ENCODE measurements at regions of chr1 and their contacts with region 1.

Region 1: GRCh38 chr1:171313835-171314320 is at the start of gene FMO4:
- DNase-seq: peak; percentile 77
- ATAC-seq: peak; percentile 100
- H3K4me3 Mint-ChIP-seq: peak within 1 kb of the TSS; percentile 68
- H3K27ac Mint-ChIP-seq: peak within 1 kb of the TSS; percentile 91
- H3K4me1 Mint-ChIP-seq: peaks cover 36% of the 10 kb centered on the region
- H3K27me3 Mint-ChIP-seq: peaks cover 5% of the 10 kb centered on the region
- CTCF ChIP-seq: peak; percentile 42; the same call in 1 of the 2 replicates
- total RNA-seq, gene FMO4: 1.8 to 3.8 TPM (median 3.6 TPM) in 3 replicates

Region 2: DNA sequence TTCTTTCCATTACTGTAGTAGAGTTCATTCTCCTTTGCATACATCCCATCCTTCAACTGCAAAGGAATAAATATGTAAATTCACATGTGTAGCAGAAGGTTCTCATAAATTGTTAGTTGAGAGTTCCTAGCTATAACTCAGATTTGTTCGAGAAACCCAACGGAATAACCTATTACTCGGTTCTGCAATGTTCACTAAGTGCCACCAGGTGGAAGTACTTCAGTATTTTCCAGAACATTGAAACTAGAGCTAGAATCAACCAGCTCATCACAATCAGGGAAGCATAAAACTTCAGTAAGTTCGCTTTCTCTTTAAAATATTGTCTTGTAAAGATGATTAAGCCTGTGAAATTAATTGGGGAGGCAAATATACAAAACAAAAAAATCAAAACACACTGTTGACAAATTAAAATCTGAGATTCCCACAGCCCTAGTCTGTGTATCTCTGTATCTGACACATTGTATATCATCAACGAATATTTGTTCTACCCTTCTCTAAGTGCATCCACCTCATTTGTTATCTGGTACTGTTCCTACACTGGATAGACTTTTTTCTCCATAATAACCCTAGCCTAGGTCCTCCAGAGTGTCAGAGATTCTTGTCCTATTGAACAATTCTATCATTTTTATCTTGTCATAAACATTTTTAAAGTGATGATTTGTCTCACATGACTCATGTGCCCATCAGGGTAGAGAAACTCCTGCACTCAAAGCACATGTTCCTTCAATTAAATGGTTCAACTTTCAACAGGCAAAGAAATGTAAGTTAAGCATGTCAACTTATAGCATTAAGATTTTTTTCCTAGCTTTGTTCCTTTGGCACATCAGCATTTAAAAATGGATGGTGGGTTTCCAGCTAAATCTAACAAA is 346.6 kb before region 1 on chr1:
- CTCF ChIA-PET with region 1: interaction called, 71 read pairs
- POLR2A ChIA-PET with region 1: no interaction called
- DNase-seq: no peak
- ATAC-seq: peak; percentile 86
- H3K4me3 Mint-ChIP-seq: no peak overlapping the region
- H3K27ac Mint-ChIP-seq: no peak overlapping the region
- H3K4me1 Mint-ChIP-seq: no peaks in the 10 kb centered on the region
- H3K27me3 Mint-ChIP-seq: no peaks in the 10 kb centered on the region
- CTCF ChIP-seq: peak; percentile 27; the same call in 1 of the 2 replicates

Region 3: DNA sequence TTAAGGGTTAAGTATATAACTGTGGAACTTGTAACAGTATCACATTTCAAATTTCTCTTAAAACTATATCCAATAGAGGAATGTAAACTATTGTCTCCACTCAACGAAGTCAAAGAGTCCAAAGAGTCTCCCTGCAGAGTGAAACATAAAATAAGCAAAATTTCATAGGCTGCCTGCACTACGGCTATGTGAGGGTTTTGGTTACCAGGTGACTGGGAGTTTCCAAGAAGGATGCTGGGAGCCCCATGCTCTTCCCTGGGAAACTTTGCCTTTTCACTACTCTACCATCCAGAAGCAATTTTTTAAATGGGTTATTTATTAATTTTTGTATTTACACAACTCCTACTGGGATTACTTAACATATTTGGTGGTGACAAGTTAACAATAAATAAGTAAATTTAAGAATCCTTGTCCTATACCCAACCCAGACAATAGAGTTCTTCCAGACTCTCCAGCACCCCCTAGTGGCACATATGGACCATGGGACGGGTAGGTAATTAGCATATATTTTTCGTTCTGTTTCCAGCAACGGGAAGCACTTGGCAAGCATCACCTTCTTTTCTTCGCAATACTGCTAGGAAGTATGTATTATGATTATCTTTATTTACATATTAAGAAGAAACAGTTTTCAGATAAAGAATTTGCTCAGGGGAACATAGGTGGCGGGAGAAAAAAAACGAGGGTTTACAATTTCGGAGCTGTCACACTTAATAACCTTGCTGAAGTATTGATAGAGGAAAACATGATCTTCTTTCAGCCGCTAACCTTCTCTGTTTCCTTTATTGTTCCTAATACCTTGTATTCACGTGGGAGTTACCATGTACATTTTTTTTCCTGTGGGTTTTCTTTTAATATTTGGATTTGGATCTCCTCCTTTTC is 125.3 kb before region 1 on chr1:
- CTCF ChIA-PET with region 1: interaction called, 18 read pairs
- POLR2A ChIA-PET with region 1: no interaction called
- DNase-seq: peak; percentile 57
- ATAC-seq: peak; percentile 95
- H3K4me3 Mint-ChIP-seq: no peak overlapping the region
- H3K27ac Mint-ChIP-seq: no peak overlapping the region
- H3K4me1 Mint-ChIP-seq: peaks cover 7% of the 10 kb centered on the region
- H3K27me3 Mint-ChIP-seq: no peaks in the 10 kb centered on the region
- CTCF ChIP-seq: peak; percentile 82

Region 4: DNA sequence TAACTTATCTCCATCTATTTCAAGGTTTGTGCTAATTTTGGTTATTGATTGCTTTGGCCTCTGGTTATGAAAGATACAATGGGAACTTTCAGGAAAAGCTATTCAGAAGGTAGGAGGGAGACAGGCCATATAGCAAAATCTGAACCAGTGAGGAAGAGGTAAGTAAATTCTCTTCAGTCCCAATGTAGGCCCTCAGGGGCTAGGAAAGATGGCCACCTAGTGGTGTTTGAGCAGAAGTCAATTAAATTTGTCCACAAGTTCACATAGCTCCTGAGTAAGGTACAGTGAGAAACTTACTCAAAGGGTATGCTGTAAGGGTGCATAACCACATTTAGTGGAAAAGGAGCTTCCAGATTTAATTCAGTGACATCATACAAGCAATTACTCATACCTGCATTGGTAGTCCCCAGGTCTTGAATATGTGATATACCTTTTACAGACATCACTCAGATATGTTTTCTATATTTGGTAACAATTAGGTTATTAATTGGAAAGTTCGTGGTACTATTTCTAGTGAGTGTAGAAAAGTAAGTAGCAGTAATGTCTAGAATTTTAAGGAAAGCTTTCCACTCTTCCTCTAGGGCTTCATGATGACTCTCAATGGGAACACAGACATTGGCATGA is 87.0 kb before region 1 on chr1:
- CTCF ChIA-PET with region 1: interaction called, 46 read pairs
- POLR2A ChIA-PET with region 1: no interaction called
- DNase-seq: peak; percentile 53
- ATAC-seq: peak; percentile 87
- H3K4me3 Mint-ChIP-seq: no peak overlapping the region
- H3K27ac Mint-ChIP-seq: no peak overlapping the region
- H3K4me1 Mint-ChIP-seq: peaks cover 32% of the 10 kb centered on the region
- H3K27me3 Mint-ChIP-seq: no peaks in the 10 kb centered on the region
- CTCF ChIP-seq: peak; percentile 60

Region 5: GRCh38 chr1:171256940-171257606 is 56.8 kb before region 1 on chr1:
- CTCF ChIA-PET with region 1: interaction called, 49 read pairs
- POLR2A ChIA-PET with region 1: no interaction called
- DNase-seq: no peak
- ATAC-seq: no peak
- H3K4me3 Mint-ChIP-seq: no peak overlapping the region
- H3K27ac Mint-ChIP-seq: no peak overlapping the region
- H3K4me1 Mint-ChIP-seq: peaks cover 26% of the 10 kb centered on the region
- H3K27me3 Mint-ChIP-seq: no peaks in the 10 kb centered on the region; the same call in 1 of the 2 replicates
- CTCF ChIP-seq: no peak

Region 6: DNA sequence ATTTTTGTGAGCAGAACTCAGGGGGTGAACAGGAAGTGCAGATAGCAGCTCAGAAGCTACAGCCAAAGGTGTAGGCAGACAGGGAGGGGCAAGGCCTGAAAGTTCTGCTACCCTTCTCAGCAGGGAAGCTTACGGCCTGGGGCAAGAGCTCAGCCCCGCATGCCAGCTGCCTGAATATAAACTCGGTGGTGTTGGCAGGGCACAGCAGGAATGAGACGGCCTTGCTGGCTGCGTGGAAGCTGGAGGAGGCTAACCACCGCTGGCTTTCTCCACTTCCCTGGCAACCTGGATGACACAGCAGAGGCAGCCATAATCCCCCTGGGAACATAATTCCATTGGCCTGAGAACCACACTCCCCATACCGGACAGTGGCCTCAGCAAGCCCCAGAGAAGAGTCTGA is 89.5 kb after region 1 on chr1:
- CTCF ChIA-PET with region 1: interaction called, 14 read pairs
- POLR2A ChIA-PET with region 1: no interaction called
- DNase-seq: peak; percentile 32
- ATAC-seq: peak; percentile 33
- H3K4me3 Mint-ChIP-seq: no peak overlapping the region
- H3K27ac Mint-ChIP-seq: no peak overlapping the region
- H3K4me1 Mint-ChIP-seq: peaks cover 31% of the 10 kb centered on the region
- H3K27me3 Mint-ChIP-seq: peaks cover 4% of the 10 kb centered on the region; the same call in 1 of the 2 replicates
- CTCF ChIP-seq: no peak